ENCODE measurements at regions of chr20 and their contacts with region 1.

Region 1: GRCh38 chr20:61861054-61861841 is 204.4 kb downstream of the TAF4 start:
- DNase-seq: no peak
- H3K4me3 ChIP-seq: no peak overlapping the region
- H3K27ac ChIP-seq: no peak overlapping the region
- H3K4me1 ChIP-seq: no peaks in the 10 kb centered on the region
- H3K27me3 ChIP-seq: no peaks in the 10 kb centered on the region
- CTCF ChIP-seq: no peak
- EP300 ChIP-seq: no peak
- POLR2A ChIP-seq: no peak

Region 2: DNA sequence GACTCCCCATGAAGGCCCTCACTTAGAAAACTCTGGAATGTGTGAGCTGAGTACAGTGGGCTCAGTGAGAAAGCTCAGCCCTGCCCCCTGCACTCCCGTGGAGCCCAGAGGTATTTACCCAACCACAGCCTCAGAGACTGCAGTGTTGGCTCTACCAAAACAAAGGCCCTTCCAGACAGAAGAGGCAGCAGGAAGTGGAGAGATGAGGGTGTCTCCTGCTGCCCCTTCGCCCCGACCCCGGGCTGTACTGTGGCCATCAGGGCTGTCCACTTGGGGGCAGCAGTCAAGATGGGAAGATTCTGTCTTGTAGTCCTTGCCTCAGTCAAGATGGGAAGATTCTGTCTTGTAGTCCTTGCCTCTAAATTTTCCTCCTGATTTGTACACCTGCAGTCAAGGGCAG is 136.9 kb before region 1 on chr20:
- intact Hi-C with region 1: loop called in 1 of 4 experiments (anchors 5 kb)
- DNase-seq: no peak
- H3K4me3 ChIP-seq: no peak overlapping the region
- H3K27ac ChIP-seq: no peak overlapping the region
- H3K4me1 ChIP-seq: no peaks in the 10 kb centered on the region
- H3K27me3 ChIP-seq: no peaks in the 10 kb centered on the region
- CTCF ChIP-seq: no peak
- EP300 ChIP-seq: no peak
- POLR2A ChIP-seq: no peak

Measured in ovary (tissue), 10 donors.